MCF 10A (cell line): ENCODE measurements at regions of chr12 and their contacts with region 1.

Region 1: DNA sequence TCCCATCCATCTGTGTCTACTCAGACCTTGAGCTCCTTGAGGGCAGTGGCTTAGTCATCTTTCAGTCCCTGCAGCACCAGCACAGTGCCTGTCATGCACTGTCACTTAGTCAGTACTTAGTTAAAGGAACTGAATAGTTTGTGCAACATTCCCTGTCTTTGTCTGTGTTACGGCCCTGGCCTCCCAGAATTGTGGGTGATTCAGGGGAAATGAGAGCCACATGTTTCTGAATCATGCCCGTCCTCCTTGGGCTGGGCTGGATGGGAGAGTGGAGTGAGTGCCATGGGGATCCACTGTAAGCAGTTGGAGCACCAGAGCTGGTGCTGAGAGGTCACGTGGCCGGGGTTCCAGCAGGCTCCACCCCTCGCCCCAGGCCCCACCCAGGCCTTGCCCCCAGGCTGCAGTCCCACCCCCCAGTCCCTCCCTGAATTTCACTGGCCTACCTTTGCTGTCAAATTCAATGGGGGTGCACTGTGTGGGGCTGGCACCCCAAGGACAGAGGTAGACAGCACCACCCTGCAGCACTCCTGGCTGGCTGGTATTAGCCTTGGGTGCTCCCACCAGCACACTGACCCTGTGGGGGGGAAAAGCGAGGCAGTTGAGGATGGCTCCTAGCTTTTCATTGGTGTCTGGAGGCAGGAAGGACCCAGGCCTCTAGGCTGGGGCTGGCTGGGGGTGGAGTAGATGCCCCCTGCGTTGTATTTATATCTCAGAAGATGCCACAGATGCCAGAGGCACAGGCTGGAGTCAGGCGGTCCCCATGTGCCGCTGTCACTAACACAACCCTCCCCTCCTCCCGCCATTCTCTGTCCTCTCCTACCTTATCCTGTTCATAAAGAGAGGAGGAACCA is 7.5 kb downstream of the ITGA5 start:
- DNase-seq: peak; percentile 96
- H3K4me3 Mint-ChIP-seq: peak overlapping the region; percentile 2
- H3K27ac Mint-ChIP-seq: peak overlapping the region; percentile 94
- H3K4me1 Mint-ChIP-seq: peaks cover 40% of the 10 kb centered on the region
- H3K27me3 Mint-ChIP-seq: no peaks in the 10 kb centered on the region
- CTCF ChIP-seq: no peak

Region 2: GRCh38 chr12:54431911-54432814 is 20.5 kb after region 1 on chr12:
- CTCF ChIA-PET with region 1: interaction called, 982 read pairs
- POLR2A ChIA-PET with region 1: interaction called, 108 read pairs
- intact Hi-C with region 1: loop called (anchors 1 kb)
- DNase-seq: peak; percentile 97
- H3K4me3 Mint-ChIP-seq: peak overlapping the region; percentile 56
- H3K27ac Mint-ChIP-seq: peak overlapping the region; percentile 83
- H3K4me1 Mint-ChIP-seq: peaks cover 55% of the 10 kb centered on the region
- H3K27me3 Mint-ChIP-seq: no peaks in the 10 kb centered on the region
- CTCF ChIP-seq: no peak

Region 3: GRCh38 chr12:54472494-54473262 is 61.1 kb after region 1 on chr12:
- CTCF ChIA-PET with region 1: no interaction called
- POLR2A ChIA-PET with region 1: no interaction called
- intact Hi-C with region 1: no loop called
- DNase-seq: no peak
- H3K4me3 Mint-ChIP-seq: no peak overlapping the region
- H3K27ac Mint-ChIP-seq: no peak overlapping the region
- H3K4me1 Mint-ChIP-seq: no peaks in the 10 kb centered on the region
- H3K27me3 Mint-ChIP-seq: no peaks in the 10 kb centered on the region
- CTCF ChIP-seq: no peak